ENCODE measurements at regions of chr4 and their contacts with region 1.

Region 1: GRCh38 chr4:81648576-81649275 is 177.0 kb upstream of the RASGEF1B start:
- DNase-seq: peak; percentile 60
- H3K4me3 Mint-ChIP-seq: no peak overlapping the region
- H3K27ac Mint-ChIP-seq: no peak overlapping the region
- H3K4me1 Mint-ChIP-seq: peaks cover 57% of the 10 kb centered on the region
- H3K27me3 Mint-ChIP-seq: no peaks in the 10 kb centered on the region

Region 2: DNA sequence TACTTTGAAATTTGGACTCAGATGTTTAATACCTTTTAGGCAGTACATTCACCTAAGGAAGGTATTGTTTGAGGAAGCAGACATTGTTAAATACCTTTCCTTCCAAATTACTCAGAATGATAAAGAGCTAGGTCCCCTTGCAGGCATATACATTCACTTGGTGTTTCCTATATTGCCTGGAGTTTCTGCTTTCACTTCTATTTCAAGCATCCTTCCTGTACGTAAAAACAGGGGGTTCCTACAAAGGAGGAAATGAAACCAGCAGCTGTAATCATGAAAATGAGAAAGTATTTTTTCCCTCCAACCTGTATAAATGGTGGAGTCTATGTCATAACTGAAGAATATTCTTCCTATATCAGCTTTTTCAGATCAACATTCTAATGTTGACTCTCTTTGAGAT is 86.6 kb before region 1 on chr4:
- CTCF ChIA-PET with region 1: no interaction called
- intact Hi-C with region 1: loop called (anchors 1 kb)
- DNase-seq: no peak
- H3K4me3 Mint-ChIP-seq: no peak overlapping the region
- H3K27ac Mint-ChIP-seq: no peak overlapping the region
- H3K4me1 Mint-ChIP-seq: peaks cover 21% of the 10 kb centered on the region
- H3K27me3 Mint-ChIP-seq: no peaks in the 10 kb centered on the region

Region 3: GRCh38 chr4:81631958-81632441 is 16.7 kb before region 1 on chr4:
- CTCF ChIA-PET with region 1: no interaction called
- intact Hi-C with region 1: loop called (anchors 2 kb)
- DNase-seq: no peak
- H3K4me3 Mint-ChIP-seq: no peak overlapping the region
- H3K27ac Mint-ChIP-seq: no peak overlapping the region
- H3K4me1 Mint-ChIP-seq: peaks cover 24% of the 10 kb centered on the region
- H3K27me3 Mint-ChIP-seq: no peaks in the 10 kb centered on the region

Region 4: GRCh38 chr4:81676537-81676936 is 27.8 kb after region 1 on chr4:
- CTCF ChIA-PET with region 1: no interaction called
- intact Hi-C with region 1: no loop called
- DNase-seq: no peak
- H3K4me3 Mint-ChIP-seq: no peak overlapping the region
- H3K27ac Mint-ChIP-seq: no peak overlapping the region
- H3K4me1 Mint-ChIP-seq: no peaks in the 10 kb centered on the region
- H3K27me3 Mint-ChIP-seq: no peaks in the 10 kb centered on the region

Region 5: GRCh38 chr4:81757691-81758090 is 109.0 kb after region 1 on chr4:
- CTCF ChIA-PET with region 1: no interaction called
- intact Hi-C with region 1: no loop called
- DNase-seq: no peak
- H3K4me3 Mint-ChIP-seq: no peak overlapping the region
- H3K27ac Mint-ChIP-seq: no peak overlapping the region
- H3K4me1 Mint-ChIP-seq: peaks cover 18% of the 10 kb centered on the region
- H3K27me3 Mint-ChIP-seq: no peaks in the 10 kb centered on the region

Region 6: GRCh38 chr4:81839347-81840042 is 190.8 kb after region 1 on chr4:
- CTCF ChIA-PET with region 1: no interaction called
- intact Hi-C with region 1: loop called (anchors 2 kb)
- DNase-seq: peak; percentile 53
- H3K4me3 Mint-ChIP-seq: no peak overlapping the region
- H3K27ac Mint-ChIP-seq: no peak overlapping the region
- H3K4me1 Mint-ChIP-seq: peaks cover 22% of the 10 kb centered on the region
- H3K27me3 Mint-ChIP-seq: no peaks in the 10 kb centered on the region

Measured in activated naive CD4-positive, alpha-beta T cell treated with anti-CD3 and anti-CD28 coated beads for 36 hours (primary cell).